ENCODE measurements at regions of chr22 and their contacts with region 1.

Region 1: GRCh38 chr22:33288078-33288477 is 229.9 kb upstream of the SYN3 start:
- H3K4me3 ChIP-seq: no peak overlapping the region
- H3K27ac ChIP-seq: no peak overlapping the region
- H3K4me1 ChIP-seq: no peaks in the 10 kb centered on the region
- CTCF ChIP-seq: no peak

Region 2: DNA sequence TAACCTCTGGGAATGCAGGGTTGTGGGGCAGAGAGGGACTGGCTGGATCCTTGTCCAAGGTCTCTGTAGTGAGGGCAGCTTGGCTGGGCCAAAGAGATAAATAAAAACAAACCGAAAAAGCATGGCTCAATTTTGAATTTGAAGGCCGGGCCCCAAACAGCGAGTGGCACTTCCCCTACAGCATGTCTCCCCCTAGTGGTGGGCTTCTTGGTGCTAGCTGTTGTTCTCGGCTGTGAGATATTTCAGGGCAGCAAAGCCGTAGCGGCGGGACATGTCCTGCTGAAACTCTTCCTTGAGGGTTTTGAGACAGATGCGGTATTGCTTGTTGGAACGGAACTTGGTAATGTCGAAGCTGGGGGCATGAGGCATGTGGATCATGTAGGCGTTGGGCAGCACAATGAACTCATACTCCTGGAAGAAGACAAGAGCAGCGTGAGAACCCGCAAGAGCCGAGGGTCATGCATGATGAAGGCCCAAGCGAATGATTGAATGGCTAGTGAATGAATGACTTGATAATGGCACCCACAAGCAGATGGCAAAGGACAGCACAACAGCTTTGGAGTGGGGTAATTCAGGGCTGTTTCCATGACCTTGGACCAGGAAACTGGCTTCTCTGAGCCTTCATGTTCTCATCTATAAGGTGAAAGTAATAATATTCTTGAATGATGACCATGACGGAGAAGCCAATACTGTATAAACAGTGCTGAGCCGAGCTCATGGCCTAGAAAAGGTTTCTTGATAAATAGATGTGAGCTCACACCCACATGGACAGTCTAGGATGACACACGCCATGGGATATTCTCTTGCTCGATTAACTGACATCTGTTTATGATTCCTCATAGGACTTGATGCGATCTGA is 13.6 kb before region 1 on chr22:
- CTCF ChIA-PET with region 1: interaction called, 19 read pairs
- POLR2A ChIA-PET with region 1: no interaction called
- H3K4me3 ChIP-seq: no peak overlapping the region
- H3K27ac ChIP-seq: no peak overlapping the region
- H3K4me1 ChIP-seq: no peaks in the 10 kb centered on the region
- CTCF ChIP-seq: no peak